Adrenal gland (tissue), 19 donors: ENCODE measurements at regions of chr2 and their contacts with region 1.

Region 1: DNA sequence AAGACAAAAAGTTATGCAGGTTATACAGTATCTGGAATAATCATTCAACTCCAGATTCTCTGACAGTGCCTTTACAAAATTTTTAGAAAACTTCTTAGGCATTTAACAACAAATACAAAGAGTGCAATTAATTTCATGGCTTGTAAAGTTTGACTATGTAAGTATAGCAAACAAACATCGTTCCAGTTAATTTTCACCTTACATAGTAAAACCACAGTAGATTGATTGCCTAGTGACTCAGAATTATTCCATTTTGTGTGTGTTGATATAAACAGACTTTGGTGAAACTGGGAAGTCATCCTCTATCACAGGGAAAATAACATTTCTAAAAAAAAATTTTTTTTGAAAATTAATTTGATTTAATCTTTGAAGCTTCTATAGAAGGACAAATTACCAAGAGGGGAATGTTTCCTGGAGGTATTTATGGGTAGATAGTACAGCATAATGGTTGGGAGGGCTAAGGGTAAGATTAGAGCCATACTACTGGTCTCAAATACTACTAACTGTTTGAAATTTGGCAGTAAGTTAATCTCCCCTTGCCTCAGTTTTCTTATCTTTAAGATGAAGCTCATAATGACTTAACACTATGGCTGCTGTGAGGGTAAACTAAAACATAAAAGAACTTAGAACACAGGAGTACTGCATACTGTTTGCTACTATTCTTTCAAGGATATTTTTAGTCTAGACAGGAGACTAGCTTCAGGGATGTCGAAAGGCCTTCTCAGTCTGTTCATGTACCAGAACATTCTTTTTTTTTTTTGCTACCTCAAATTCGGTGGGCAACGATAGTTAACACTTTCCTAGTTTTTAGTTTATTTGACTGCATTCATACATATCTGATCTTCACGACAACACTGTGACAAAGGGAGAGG is 19.6 kb downstream of the NDUFAF7 start:
- DNase-seq: no peak
- H3K4me3 ChIP-seq: no peak overlapping the region
- H3K27ac ChIP-seq: peak overlapping the region in 1 of 5 donors; percentile 36
- H3K4me1 ChIP-seq: peaks cover 0 to 8% of the 10 kb centered on the region in 2 donors
- H3K27me3 ChIP-seq: no peaks in the 10 kb centered on the region
- CTCF ChIP-seq: no peak
- POLR2A ChIP-seq: no peak

Region 2: GRCh38 chr2:37110306-37111212 is 140.5 kb before region 1 on chr2:
- intact Hi-C with region 1: no loop called
- DNase-seq: no peak
- H3K4me3 ChIP-seq: no peak overlapping the region
- H3K27ac ChIP-seq: no peak overlapping the region
- H3K4me1 ChIP-seq: no peaks in the 10 kb centered on the region
- H3K27me3 ChIP-seq: no peaks in the 10 kb centered on the region
- CTCF ChIP-seq: no peak
- POLR2A ChIP-seq: no peak

Region 3: GRCh38 chr2:37205689-37206341 is 45.3 kb before region 1 on chr2:
- intact Hi-C with region 1: loop called in 1 of 2 experiments (anchors 2 kb)
- DNase-seq: no peak
- H3K4me3 ChIP-seq: no peak overlapping the region
- H3K27ac ChIP-seq: no peak overlapping the region
- H3K4me1 ChIP-seq: no peaks in the 10 kb centered on the region
- H3K27me3 ChIP-seq: no peaks in the 10 kb centered on the region
- CTCF ChIP-seq: no peak
- POLR2A ChIP-seq: no peak